H1 (cell line): ENCODE measurements at regions of chr6 and their contacts with region 1.

Region 1: DNA sequence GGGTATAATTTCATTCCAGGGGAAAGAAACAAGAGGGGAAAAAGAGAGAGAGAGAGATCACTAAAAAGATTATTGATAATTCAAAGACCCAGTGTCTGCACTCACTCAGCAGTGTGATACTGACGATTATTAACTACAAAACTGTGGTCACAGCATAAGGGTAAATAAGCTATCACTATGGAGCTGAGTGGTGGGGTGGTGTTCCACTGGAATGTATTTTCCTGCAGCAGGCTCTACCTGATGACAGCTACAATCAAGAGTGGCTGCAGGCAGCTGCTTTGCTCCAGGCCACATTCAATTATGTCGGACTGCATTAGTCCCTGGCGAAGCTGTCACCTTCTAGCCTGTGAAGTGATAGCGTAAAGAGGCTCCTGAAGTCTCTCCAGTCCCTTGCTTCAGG is 122.2 kb upstream of the TFAP2D start:
- DNase-seq: no peak
- H3K4me3 ChIP-seq: no peak overlapping the region
- H3K27ac ChIP-seq: no peak overlapping the region
- H3K4me1 ChIP-seq: no peaks in the 10 kb centered on the region
- H3K27me3 ChIP-seq: no peaks in the 10 kb centered on the region
- CTCF ChIP-seq: no peak
- EP300 ChIP-seq: no peak
- POLR2A ChIP-seq: no peak
- RAD21 ChIP-seq: no peak

Region 2: DNA sequence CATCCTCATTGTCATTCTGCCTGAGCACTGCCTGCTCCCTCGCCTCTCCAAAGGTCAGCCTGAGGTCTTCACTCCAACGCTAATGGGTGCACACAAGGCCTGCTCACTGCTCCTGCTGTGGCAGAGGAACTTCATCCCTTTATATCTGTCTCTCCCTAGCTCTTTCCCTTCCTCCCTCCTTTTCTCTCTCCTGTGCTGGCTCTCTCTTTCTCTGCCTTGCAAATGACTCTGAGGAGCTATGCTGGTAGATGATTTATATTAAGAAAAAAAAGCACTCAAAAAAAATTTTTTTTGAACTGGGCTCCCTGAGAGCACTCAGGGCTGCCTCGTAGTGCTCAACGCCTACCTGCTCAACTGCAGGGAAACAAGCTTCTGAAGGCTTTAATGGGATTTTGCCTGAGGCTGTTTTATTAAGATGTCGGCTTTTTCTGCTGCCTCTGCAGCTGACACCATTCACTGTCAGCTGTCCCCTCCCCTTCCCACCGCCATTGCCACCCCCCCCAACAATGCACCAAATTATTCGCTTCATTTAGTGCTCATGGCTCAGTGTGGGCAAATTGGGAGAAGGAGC is 403.7 kb before region 1 on chr6:
- CTCF ChIA-PET with region 1: interaction called, 10 read pairs
- POLR2A ChIA-PET with region 1: no interaction called
- DNase-seq: no peak
- H3K4me3 ChIP-seq: no peak overlapping the region
- H3K27ac ChIP-seq: no peak overlapping the region
- H3K4me1 ChIP-seq: peaks cover 0 to 3% (median 0%) of the 10 kb centered on the region in 4 experiments; a peak in 2 of 7 replicates
- H3K27me3 ChIP-seq: no peaks in the 10 kb centered on the region
- CTCF ChIP-seq: no peak
- EP300 ChIP-seq: no peak
- POLR2A ChIP-seq: no peak
- RAD21 ChIP-seq: no peak